ENCODE measurements at regions of chrX and their contacts with region 1.

Region 1: GRCh38 chrX:79170476-79171035 is 26.1 kb downstream of the GPR174 start:
- DNase-seq: no peak

Region 2: DNA sequence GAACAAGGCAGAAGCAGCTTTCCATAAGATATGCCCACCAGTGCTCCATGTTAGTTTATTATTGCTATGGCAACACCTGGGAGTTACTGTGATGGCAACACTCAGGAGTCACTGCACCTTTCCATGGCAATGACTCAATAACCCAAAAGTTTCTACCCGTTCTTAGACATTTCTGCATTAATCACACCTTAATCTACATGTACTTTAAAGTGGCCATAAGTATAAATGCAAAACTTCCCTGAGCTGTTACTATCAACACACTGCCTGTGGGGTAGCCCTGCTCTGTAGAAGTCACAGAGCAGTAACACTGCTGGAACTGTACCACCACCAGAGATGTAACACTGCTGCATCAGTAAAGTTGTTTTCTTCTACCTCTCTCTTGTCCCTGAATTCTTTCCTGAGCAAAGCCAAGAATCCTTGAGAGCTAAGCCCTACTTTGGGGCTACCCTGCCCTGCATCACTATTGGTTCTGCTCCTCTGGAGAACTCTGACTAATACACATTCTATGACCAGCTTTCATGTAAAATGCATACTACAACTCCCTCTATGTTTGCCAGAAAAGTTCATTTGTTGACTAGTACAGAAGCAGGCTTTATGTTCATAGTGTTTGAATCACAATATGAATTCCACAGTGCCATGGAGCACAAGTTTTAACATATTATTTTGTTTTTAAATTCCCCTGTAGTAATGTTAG is 69.6 kb before region 1 on chrX:
- intact Hi-C with region 1: no loop called
- DNase-seq: no peak

Region 3: GRCh38 chrX:79146640-79147390 is 23.7 kb before region 1 on chrX:
- intact Hi-C with region 1: loop called in 1 of 2 experiments (anchors 1 kb)
- DNase-seq: no peak

Measured in posterior vena cava (tissue), 2 donors.